MCF 10A (cell line): ENCODE measurements at regions of chr17 and their contacts with region 1.

Region 1: GRCh38 chr17:42760652-42761581 is at the start of gene RAMP2:
- DNase-seq: no peak
- H3K4me3 Mint-ChIP-seq: no peak within 1 kb of the TSS
- H3K27ac Mint-ChIP-seq: no peak within 1 kb of the TSS
- H3K4me1 Mint-ChIP-seq: peaks cover 5% of the 10 kb centered on the region
- H3K27me3 Mint-ChIP-seq: peaks cover 20% of the 10 kb centered on the region
- CTCF ChIP-seq: no peak
- total RNA-seq, gene RAMP2: not detected in 2 replicates

Region 2: DNA sequence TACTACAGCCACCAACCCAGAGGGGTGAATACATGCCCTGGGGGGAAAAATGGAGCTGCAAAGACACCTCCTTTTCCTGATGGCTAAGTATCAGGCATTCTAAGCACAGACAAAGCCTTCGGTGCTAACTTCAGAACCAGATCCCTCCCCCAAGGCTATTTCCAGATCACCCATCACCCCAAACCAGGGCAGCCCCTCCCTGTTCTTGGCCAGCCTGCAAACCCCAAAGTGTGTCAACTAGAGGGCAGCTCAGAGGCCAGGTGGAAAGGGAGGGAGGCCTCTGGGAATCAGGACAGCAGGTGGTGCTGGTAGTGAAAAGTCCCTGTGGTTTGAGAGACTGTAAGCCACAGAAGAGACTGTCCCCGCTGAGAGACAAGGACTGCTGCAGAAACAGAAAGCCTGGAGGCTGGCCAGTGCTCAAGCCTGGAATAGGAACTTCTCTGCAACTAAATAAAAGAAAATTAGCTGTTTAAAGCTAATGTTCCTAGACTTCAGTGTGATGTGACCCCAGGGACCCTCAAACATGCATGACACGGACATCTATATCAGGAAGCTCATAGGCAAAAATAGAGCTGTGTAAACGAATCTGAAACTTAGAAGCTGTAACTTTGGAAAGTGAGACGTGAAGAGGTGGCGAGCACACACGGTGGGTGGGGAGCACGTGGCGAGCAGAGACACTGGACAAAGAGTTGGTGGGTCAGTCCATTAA is 142.3 kb before region 1 on chr17:
- CTCF ChIA-PET with region 1: no interaction called
- POLR2A ChIA-PET with region 1: no interaction called
- intact Hi-C with region 1: loop called (anchors 1 kb)
- DNase-seq: peak; percentile 80
- H3K4me3 Mint-ChIP-seq: no peak overlapping the region
- H3K27ac Mint-ChIP-seq: peak overlapping the region; percentile 42
- H3K4me1 Mint-ChIP-seq: peaks cover 15% of the 10 kb centered on the region
- H3K27me3 Mint-ChIP-seq: no peaks in the 10 kb centered on the region
- CTCF ChIP-seq: peak; percentile 47

Region 3: GRCh38 chr17:42720996-42721583 is 39.8 kb before region 1 on chr17:
- CTCF ChIA-PET with region 1: interaction called, 14 read pairs
- POLR2A ChIA-PET with region 1: no interaction called
- intact Hi-C with region 1: loop called (anchors 1 kb)
- DNase-seq: peak; percentile 71
- H3K4me3 Mint-ChIP-seq: no peak overlapping the region
- H3K27ac Mint-ChIP-seq: no peak overlapping the region
- H3K4me1 Mint-ChIP-seq: no peaks in the 10 kb centered on the region
- H3K27me3 Mint-ChIP-seq: no peaks in the 10 kb centered on the region
- CTCF ChIP-seq: peak; percentile 62

Region 4: GRCh38 chr17:42744806-42745617 is 15.9 kb before region 1 on chr17 and contains the start of gene EZH1:
- CTCF ChIA-PET with region 1: interaction called, 23 read pairs
- POLR2A ChIA-PET with region 1: interaction called, 4 read pairs
- intact Hi-C with region 1: loop called (anchors 2 kb)
- DNase-seq: peak; percentile 90
- H3K4me3 Mint-ChIP-seq: peak within 1 kb of the TSS; percentile 91
- H3K27ac Mint-ChIP-seq: peak within 1 kb of the TSS; percentile 96
- H3K4me1 Mint-ChIP-seq: peaks cover 10% of the 10 kb centered on the region
- H3K27me3 Mint-ChIP-seq: no peaks in the 10 kb centered on the region
- CTCF ChIP-seq: no peak
- total RNA-seq, gene EZH1: 31.1 and 31.7 TPM in 2 replicates